ENCODE measurements at regions of chr10 and their contacts with region 1.

Region 1: GRCh38 chr10:90879062-90879461 is 7.3 kb downstream of the RPP30 start:
- DNase-seq: no peak
- CTCF ChIP-seq: no peak

Region 2: GRCh38 chr10:90834326-90834725 is 44.7 kb before region 1 on chr10:
- CTCF ChIA-PET with region 1: no interaction called
- POLR2A ChIA-PET with region 1: no interaction called
- DNase-seq: no peak
- CTCF ChIP-seq: no peak

Region 3: DNA sequence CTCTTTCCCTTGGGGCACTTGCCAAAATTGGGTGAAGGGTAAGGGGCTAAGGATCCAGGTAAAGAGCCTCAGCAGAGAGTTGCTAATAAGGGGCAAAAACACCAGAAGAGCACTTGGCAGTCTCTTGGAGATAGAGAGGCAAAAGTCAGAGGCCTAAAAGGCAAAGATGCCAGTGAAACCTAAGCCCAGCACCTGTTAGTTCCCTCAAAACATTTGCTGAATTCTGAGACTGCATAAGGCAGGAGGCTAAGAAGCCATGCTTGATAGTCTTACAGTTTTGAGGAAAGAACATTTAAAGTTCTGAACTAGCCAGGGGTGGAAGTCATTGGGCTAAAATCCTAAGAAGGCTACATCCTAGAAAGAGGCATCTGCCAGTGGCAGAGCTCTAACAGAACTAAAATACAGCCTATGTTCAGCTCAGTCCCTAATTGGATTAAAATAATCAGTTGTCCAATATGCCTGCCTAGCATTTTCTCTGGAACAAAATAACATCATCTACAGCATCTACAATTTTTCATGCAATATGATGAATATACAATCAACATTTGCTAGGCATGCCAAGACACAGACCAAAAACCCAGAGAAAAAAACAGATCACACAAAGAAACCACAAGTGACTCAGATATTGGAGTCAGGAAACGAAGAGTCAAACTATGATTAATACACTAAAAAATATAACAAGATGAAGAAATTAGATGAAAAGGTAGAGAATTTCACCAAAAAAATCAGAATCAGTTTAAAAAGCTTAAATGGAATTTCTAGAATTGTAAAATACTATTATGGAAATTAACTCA is 28.9 kb before region 1 on chr10:
- CTCF ChIA-PET with region 1: no interaction called
- POLR2A ChIA-PET with region 1: no interaction called
- DNase-seq: no peak
- CTCF ChIP-seq: no peak

Region 4: GRCh38 chr10:90865401-90865800 is 13.7 kb before region 1 on chr10:
- CTCF ChIA-PET with region 1: interaction called, 11 read pairs
- POLR2A ChIA-PET with region 1: no interaction called
- DNase-seq: no peak
- CTCF ChIP-seq: peak; percentile 8

Measured in GM10248 (cell line).